H1 (cell line): ENCODE measurements at regions of chr14 and their contacts with region 1.

Region 1: DNA sequence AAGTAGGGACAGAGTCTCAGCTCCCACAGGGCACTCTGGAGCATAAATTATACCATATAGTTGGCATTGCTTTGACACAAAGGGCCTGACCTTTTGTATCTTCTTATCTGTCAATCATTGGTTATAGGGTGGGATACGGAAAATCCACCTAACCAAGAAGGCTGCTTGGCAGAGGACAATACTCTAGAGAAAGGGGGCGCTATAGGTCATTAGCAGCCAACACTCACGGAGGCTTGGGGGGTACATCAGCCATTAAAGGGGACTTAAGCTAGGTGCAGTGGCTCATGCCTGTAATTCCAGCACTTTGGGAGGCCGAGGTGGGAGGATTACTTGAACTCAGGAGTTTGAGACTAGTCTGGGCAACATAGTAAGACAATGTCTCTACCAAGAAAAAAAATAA is 22.9 kb downstream of the SPTSSA start:
- DNase-seq: peak in 1 of 2 experiments; percentile 13
- H3K4me3 ChIP-seq: no peak overlapping the region
- H3K27ac ChIP-seq: no peak overlapping the region
- H3K4me1 ChIP-seq: peaks cover 0 to 2% (median 0%) of the 10 kb centered on the region in 4 experiments; a peak in 1 of 7 replicates
- H3K27me3 ChIP-seq: no peaks in the 10 kb centered on the region
- CTCF ChIP-seq: peak; percentile 41 to 68 (median 43)
- EP300 ChIP-seq: no peak
- POLR2A ChIP-seq: no peak
- RAD21 ChIP-seq: peak; percentile 36 to 55

Region 2: GRCh38 chr14:34425095-34425851 is 13.8 kb before region 1 on chr14:
- CTCF ChIA-PET with region 1: interaction called, 18 read pairs
- POLR2A ChIA-PET with region 1: interaction called, 3 read pairs
- DNase-seq: no peak
- H3K4me3 ChIP-seq: no peak overlapping the region
- H3K27ac ChIP-seq: no peak overlapping the region
- H3K4me1 ChIP-seq: no peaks in the 10 kb centered on the region
- H3K27me3 ChIP-seq: no peaks in the 10 kb centered on the region
- CTCF ChIP-seq: no peak
- EP300 ChIP-seq: no peak
- POLR2A ChIP-seq: no peak
- RAD21 ChIP-seq: no peak

Region 3: GRCh38 chr14:34453229-34453628 is 14.1 kb after region 1 on chr14:
- CTCF ChIA-PET with region 1: interaction called, 20 read pairs
- POLR2A ChIA-PET with region 1: interaction called, 11 read pairs
- DNase-seq: no peak
- H3K4me3 ChIP-seq: no peak overlapping the region
- H3K27ac ChIP-seq: no peak overlapping the region
- H3K4me1 ChIP-seq: peaks cover 0 to 2% (median 0%) of the 10 kb centered on the region in 4 experiments; a peak in 1 of 7 replicates
- H3K27me3 ChIP-seq: no peaks in the 10 kb centered on the region
- CTCF ChIP-seq: no peak
- EP300 ChIP-seq: no peak
- POLR2A ChIP-seq: no peak
- RAD21 ChIP-seq: no peak